Heart right ventricle (tissue), 16 donors: ENCODE measurements at regions of chr20 and their contacts with region 1.

Region 1: DNA sequence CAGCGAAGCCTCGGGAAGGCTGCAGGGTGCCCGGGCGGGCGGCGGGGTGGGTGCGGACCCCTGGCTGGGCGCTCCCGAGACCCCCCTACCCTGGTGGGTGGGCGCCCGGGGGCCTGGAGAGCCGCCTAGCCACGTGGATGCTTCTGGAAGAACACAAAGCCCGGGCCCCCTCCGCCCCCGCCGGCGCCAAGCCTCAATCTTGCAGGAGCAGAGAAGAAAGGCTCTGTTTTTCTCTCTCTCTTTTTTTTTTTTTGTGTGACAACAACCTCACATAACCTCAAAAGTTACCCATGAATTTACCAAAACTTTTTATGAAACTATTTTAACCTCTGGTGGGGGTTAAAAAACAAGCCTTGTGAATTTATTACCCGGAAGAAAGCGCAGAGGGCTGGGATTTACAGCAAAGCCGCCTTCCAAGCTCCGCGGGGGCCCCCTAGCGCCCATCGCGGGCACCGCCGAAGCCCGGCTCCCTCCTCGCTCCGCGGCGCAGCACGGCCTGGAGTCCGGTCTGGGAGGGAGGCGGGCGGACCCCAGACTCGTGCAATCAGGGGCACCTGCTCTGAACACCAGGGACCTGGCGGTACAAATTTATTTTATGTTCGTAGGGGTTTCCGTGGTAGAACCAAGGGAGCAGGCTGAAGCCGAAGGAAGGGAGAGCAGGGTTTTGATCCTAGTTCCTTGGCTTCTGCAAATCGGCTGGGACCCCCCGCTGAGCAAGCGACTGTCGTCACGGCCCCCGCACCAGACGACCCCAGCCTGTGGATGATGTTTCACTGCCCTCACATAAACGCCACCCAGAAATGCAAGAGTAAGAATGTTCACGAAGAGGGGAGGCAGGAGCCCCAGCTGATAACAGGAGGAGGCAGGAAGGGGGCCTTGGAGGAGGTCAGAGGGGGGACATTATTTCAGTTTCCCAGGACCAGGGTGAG is 58.9 kb downstream of the ZNF831 start:
- DNase-seq: peak; percentile 77 to 87
- ATAC-seq: peak; percentile 85 to 95 (median 93)
- H3K4me3 ChIP-seq: peak overlapping the region; percentile 22 to 64 (median 60)
- H3K27ac ChIP-seq: peak overlapping the region in 9 of 10 donors; percentile 25 to 84 (median 75)
- H3K4me1 ChIP-seq: peaks cover 9 to 28% (median 21%) of the 10 kb centered on the region in 9 donors
- H3K27me3 ChIP-seq: peaks cover 0 to 52% (median 33%) of the 10 kb centered on the region in 7 donors
- CTCF ChIP-seq: peak; percentile 90 to 99 (median 96)

Region 2: DNA sequence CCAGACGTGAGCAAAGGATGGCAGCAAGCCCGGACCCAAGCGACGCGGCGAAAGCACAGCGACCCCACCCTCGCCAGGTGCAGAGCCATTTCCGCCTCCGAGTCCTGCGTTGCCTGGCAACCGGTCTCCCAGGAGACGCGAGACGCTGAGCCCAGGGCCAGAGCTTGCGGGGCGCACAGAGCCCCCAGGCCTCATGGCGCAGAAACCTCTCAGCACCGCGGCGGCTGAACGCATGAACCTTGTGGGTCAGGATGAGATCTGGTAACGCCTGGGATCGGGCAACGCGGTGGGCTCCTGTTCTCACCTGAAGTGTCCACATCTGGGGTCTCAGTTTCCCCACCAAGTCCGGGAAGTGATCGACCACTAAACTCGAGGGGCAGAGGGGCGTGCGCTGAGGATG is 1071.7 kb before region 1 on chr20:
- intact Hi-C with region 1: no loop called
- DNase-seq: no peak
- ATAC-seq: no peak
- H3K4me3 ChIP-seq: no peak overlapping the region
- H3K27ac ChIP-seq: no peak overlapping the region
- H3K4me1 ChIP-seq: no peaks in the 10 kb centered on the region
- H3K27me3 ChIP-seq: peaks cover 0 to 87% (median 68%) of the 10 kb centered on the region in 7 donors
- CTCF ChIP-seq: no peak

Region 3: DNA sequence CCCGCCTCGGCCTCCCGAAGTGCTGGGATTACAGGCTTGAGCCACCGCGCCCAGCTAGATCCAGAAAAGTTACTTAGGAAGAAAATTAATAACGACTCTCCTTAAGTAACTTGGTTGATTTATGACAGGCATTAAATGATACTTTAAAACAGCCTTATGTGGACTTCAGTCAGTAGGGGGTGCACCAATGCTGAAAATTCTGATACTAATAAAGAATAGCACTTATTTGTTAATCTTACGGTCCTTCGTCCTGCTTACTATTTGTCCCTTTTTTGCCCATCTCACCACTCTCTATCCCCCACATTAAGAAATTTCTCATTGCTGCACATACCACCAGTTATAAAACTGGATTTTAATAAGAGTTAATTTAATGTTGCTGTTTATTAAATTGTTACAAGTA is 167.2 kb before region 1 on chr20:
- intact Hi-C with region 1: loop called in 1 of 10 experiments (anchors 5 kb)
- DNase-seq: peak in 1 of 2 donors; percentile 25
- ATAC-seq: peak in 1 of 8 donors; percentile 57
- H3K4me3 ChIP-seq: no peak overlapping the region
- H3K27ac ChIP-seq: no peak overlapping the region
- H3K4me1 ChIP-seq: no peaks in the 10 kb centered on the region
- H3K27me3 ChIP-seq: peaks cover 0 to 53% (median 5%) of the 10 kb centered on the region in 7 donors
- CTCF ChIP-seq: peak in 8 of 9 donors; percentile 13 to 64 (median 54)

Region 4: DNA sequence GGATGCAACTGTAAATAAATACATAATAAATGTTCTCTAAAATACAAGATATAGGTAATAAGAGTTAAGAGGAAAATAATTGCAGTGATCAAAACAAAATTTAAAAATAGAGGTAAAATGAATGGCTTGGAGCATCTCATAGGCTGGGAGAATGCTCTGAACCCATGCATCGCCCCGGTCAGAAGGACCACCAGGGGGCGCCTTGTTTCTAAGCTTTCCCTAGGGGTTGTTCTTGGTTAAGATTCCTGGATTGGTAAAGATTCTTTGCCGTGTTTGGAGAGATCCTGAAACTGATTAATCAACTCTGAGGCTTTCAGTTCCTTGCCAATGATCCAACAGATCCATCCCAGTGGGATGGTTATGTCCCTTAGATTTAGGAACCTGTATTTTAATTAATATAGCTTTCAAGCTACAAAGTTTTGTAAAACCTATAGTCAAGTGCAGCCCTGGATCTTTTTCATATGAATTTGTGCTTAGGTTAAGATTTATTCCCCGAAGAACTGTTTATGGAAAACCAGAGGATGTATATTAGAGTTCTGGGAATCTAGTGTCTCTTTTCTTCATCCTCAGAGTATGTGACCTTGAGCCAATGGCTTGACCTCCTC is 134.6 kb before region 1 on chr20:
- intact Hi-C with region 1: loop called (anchors 1 to 5 kb)
- DNase-seq: peak; percentile 81 to 84
- ATAC-seq: peak in 6 of 8 donors; percentile 74 to 88 (median 86)
- H3K4me3 ChIP-seq: no peak overlapping the region
- H3K27ac ChIP-seq: no peak overlapping the region
- H3K4me1 ChIP-seq: peaks cover 0 to 17% (median 0%) of the 10 kb centered on the region in 9 donors
- H3K27me3 ChIP-seq: peaks cover 0 to 9% (median 0%) of the 10 kb centered on the region in 7 donors
- CTCF ChIP-seq: peak; percentile 80 to 97 (median 94)

Region 5: DNA sequence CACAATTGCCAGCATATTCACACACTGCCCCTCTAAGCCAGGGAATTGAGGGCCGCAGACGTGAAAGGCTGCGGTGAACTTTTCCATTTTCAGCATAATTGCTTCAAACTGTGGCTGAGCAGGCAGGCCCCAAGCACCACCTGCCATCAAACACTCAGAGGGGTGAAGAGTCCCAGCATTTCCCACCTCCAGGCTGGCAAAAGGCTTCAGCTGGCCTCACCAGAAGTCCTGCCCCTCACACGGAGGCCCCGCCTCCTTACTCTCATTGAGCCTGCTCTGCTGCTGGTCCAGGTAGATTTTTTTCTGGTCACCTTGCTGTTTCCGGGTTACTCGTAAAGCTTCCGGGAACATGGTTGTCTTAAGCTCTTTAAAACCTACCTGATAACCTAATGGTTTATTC is 127.9 kb before region 1 on chr20:
- intact Hi-C with region 1: loop called in 5 of 10 experiments (anchors 2 to 5 kb)
- DNase-seq: no peak
- ATAC-seq: no peak
- H3K4me3 ChIP-seq: no peak overlapping the region
- H3K27ac ChIP-seq: no peak overlapping the region
- H3K4me1 ChIP-seq: no peaks in the 10 kb centered on the region
- H3K27me3 ChIP-seq: peaks cover 0 to under 1% (median 0%) of the 10 kb centered on the region in 7 donors
- CTCF ChIP-seq: no peak

Region 6: DNA sequence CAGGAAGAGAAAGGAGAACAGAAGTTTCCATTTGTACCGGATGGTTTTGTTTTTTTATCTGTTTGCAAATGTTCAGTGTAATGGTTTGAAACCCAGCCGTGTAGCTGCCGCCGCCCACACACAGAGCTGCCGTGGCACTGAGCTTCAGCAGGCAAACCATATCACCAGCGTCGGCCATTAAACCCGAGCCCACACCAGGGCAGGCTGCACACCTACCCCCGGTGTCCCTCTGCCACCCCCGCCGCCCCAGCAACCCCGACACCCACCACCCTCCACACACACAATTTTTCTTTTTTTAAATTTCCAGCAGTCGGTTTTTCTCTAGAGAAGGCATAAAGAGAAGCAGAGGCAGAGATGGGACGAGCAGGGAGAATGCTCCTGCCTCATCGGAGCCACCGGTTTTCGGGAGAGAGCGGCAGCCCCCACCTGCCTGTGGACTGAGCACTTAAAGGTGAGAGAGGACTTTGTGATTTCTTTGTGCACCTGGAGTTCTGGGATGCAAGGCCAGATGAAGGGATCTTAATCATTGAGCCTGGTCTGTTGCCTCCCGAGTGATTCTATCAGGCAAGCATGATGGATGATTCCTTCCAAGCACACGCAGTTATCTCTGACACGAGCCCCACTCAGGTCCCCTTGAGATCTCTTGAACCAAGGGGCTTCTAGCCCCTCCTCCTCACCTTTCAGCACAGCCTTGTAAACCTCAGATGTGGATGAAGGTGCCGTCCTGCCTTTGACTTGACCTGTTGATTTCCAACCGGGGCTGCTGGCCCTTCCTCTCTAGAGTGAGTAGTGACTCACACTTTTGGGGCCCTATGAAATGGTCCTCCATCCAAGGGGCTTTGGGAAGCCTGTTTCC is 76.4 kb before region 1 on chr20:
- intact Hi-C with region 1: loop called in 1 of 10 experiments (anchors 2 kb)
- DNase-seq: peak in 1 of 2 donors; percentile 28
- ATAC-seq: peak in 6 of 8 donors; percentile 32 to 66 (median 48)
- H3K4me3 ChIP-seq: peak overlapping the region in 2 of 10 donors; percentile 2 to 24
- H3K27ac ChIP-seq: peak overlapping the region in 9 of 10 donors; percentile 27 to 78 (median 72)
- H3K4me1 ChIP-seq: peaks cover 4 to 53% (median 40%) of the 10 kb centered on the region in 9 donors
- H3K27me3 ChIP-seq: no peaks in the 10 kb centered on the region
- CTCF ChIP-seq: no peak

Region 7: DNA sequence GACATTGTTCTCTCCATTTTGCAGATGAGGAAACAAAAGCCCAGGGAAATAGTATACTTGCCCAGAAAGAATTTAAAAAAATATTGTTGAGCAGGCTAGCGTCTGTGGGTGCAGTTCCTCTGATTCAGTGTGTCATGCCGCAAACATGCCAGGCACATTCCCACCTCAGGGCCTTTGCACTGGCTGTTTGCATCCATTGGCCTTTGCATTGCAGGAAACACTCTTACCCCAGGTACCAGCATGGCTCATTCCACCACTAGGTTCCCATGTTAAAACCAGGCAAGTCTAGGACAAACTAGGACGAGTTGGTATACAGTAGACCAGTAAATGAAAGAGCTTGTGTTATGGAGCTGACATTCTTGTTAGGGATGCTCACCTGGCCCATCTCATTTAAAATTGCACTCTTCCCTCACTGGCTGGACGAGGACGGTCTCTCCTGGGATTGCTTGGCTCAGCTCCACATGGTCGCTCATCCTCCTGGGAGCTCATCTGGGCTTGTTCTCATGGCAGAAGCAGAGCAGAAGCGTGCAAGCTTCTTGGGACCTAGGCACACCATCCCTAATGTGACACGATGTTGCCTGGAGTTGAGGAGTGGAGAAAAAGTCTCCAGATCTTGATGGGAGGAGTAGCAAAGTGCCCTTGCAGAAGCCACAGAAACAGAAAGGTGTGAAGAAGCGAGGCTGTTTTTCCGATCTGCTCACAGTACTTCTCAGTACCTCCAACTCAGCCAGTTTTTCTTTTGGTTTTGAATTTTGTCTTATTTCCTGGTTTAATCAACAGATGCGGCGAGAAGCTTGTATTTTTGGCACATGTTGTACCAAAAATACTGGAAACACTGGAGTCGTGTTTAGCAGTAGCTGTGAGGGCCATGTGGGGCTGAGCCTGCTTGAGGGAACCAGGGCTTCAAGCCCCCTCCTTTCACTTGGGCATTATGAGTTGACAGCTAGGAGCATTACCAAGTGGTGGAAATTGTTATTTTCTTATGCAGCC is 45.0 kb before region 1 on chr20:
- intact Hi-C with region 1: no loop called
- DNase-seq: no peak
- ATAC-seq: peak in 1 of 8 donors; percentile 37
- H3K4me3 ChIP-seq: no peak overlapping the region
- H3K27ac ChIP-seq: peak overlapping the region in 4 of 10 donors; percentile 10 to 64 (median 40)
- H3K4me1 ChIP-seq: peaks cover 0 to 57% (median 40%) of the 10 kb centered on the region in 9 donors
- H3K27me3 ChIP-seq: peaks cover 0 to 6% (median 0%) of the 10 kb centered on the region in 7 donors
- CTCF ChIP-seq: no peak

Region 8: DNA sequence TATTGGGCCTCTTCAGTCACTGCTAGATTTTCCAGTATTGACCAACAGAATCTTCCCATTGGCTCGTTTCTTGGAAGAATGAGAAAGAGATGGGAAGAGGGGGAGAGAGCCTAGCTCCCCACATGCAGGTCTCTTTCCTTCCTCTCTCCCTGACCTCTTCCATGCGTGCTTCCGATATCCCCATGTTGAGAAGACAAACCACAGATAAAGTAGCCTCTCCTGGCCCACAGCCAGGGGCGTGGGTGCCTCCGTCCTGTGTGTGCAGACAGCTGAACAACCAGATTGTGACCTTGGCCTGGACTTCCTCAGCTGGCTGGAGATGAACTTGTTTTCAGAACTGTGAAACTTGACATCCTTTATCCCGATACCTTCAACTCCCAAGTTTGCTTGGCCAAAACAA is 148.9 kb after region 1 on chr20:
- intact Hi-C with region 1: no loop called
- DNase-seq: no peak
- ATAC-seq: no peak
- H3K4me3 ChIP-seq: no peak overlapping the region
- H3K27ac ChIP-seq: no peak overlapping the region
- H3K4me1 ChIP-seq: no peaks in the 10 kb centered on the region
- H3K27me3 ChIP-seq: peaks cover 0 to 31% (median 7%) of the 10 kb centered on the region in 7 donors
- CTCF ChIP-seq: no peak

Region 9: DNA sequence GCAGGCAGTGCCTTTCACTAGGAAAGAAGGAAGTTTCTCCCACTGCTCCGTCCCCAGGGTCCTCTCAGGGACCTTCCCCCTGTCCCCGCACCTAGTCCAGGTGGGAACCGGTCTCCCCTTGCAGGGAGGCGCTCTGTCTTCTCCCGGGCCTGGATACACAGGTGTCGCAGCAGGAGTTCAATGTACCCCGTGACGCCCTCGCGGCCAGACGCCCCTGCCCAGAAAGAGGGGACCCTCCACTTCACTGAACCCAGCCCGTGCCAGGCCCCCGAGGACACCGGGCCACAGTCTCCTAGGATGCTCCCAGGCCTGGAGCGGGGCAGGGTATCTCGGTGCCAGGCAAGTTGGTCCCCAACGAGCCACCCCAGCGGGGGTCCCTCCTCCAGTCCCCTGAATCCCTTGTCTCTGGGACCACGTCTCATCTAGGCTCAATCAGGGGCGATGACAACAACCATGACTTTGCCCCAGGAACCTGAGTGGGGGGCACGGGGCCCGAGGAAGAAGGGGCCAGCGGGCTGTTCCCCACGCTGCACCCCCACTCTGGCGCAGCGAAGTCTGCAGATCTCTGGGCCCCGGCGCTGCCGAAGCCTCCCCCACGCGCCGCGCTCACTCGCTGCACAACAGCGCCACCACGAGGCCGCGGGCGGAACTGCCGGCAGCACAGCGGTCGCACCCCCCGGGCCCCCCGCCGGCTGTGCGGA is 180.9 kb after region 1 on chr20:
- intact Hi-C with region 1: loop called in 1 of 10 experiments (anchors 10 kb)
- DNase-seq: peak; percentile 21 to 52
- ATAC-seq: peak; percentile 60 to 78 (median 68)
- H3K4me3 ChIP-seq: peak overlapping the region in 3 of 10 donors; percentile 9 to 17 (median 10)
- H3K27ac ChIP-seq: no peak overlapping the region
- H3K4me1 ChIP-seq: peaks cover 0 to 19% (median 10%) of the 10 kb centered on the region in 9 donors
- H3K27me3 ChIP-seq: peaks cover 12 to 97% (median 89%) of the 10 kb centered on the region in 7 donors
- CTCF ChIP-seq: peak; percentile 80 to 98 (median 95)